Ascending aorta (tissue), 2 donors: ENCODE measurements at regions of chr15 and their contacts with region 1.

Region 1: DNA sequence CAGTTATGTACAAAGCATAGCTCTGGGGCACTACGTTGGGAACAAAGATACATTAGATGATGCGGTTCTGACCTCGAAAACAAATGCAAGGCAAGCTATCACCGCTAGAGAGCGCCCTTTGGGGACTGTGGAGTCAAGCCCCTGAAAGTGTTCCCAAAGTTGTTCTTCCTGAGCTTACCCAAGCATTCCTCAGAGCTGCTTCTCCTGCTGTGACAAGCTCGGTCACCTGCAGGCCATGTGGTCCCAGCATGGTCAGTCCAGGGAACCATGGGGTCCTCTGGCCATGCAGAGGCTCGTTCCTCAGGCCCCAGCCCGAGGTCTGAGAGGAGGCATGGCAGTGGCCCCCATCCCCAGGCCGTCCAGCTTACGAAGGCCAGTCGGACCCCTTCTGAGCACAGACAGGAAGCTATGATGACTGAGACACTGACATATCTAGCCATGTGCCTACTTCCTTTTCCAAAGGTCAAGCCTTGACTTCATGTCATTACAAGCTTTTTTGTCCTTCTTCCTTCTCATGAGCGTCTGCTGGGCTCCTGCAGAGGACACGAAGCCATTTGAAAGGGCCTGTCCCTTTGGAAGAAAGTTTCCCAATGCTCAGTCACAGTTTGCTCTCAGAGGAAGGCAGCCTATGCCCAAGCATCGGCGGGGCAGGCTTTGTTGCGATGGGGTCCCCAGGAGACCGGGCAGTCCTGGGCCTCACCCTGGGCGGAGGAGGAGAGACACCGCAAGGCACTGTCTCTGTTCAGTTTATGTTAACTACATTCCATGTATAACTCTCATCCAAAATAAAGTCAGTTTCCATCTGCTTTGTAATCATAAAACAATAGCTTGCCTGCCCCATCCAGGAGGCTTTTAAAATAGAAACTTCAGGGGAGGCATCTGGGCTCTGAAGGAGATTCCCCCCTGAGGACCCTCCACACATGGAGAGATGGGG is 79.3 kb downstream of the ATP10A start:
- DNase-seq: no peak
- H3K4me3 ChIP-seq: no peak overlapping the region
- H3K27ac ChIP-seq: peak overlapping the region; percentile 54 to 72
- H3K4me1 ChIP-seq: peaks cover 14 to 33% of the 10 kb centered on the region in 2 donors
- H3K27me3 ChIP-seq: no peaks in the 10 kb centered on the region
- CTCF ChIP-seq: peak; percentile 16 to 41 (median 22)

Region 2: DNA sequence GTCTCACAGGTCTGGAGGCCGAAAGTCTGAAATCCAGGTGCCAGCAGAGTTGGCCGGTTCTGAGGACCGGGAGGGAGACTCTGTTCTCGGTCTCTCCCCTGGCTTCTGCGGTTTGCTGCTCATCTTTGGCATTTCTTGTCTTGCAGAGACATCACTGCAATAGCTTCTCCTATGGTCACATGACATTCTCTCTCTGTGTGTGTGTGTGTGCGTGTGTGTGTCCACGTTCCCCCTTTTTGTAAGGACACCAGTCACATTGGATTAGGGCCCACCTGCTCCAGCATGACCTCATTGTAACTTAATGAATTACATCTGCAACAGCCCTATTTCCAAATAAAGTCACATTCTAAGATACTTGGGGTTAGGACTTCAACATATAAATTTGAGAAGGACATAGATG is 91.7 kb after region 1 on chr15:
- intact Hi-C with region 1: no loop called
- DNase-seq: no peak
- H3K4me3 ChIP-seq: no peak overlapping the region
- H3K27ac ChIP-seq: no peak overlapping the region
- H3K4me1 ChIP-seq: no peaks in the 10 kb centered on the region
- H3K27me3 ChIP-seq: no peaks in the 10 kb centered on the region
- CTCF ChIP-seq: no peak

Region 3: DNA sequence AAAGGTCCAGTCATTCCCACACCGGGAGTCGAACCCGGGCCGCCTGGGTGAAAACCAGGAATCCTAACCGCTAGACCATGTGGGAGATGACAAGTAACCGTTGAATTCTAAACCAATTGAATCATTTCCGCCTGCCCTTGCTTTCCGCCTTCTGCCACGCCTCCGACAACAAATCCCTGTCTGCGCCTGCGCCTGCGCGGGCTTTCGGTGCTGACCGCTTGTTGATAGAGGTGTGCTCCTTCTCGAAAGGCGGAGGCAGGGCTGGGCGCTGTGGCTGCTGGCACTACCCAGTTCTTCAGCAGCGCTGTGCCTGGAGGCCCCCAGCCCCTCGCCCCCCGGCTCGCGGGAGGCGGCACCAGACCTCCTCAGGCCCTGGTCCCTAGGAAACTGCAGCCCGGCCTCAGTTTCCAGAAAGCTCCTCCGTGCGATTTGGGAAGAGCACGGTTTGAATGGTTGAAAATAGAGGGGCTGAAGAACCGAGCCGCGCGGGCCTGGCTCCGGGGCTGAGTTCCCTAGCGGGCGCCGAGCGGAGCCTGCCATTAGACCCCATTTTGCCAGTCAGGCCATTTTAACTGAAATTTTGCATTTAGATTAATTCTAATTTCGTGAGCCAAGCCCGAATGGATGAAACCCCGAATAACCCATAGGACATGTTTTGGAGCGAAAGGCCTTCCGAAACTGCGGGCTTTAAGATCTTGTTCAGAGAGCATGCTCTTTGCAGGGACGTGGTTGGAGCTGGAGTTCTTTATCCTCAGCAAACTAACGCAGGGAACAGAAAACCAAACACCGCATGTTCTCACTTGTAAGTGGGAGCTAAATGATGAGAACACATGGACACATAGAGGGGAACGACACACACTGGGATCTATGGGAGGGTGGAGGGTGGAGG is 298.6 kb after region 1 on chr15:
- intact Hi-C with region 1: loop called (anchors 10 kb)
- DNase-seq: peak; percentile 90 to 99
- H3K4me3 ChIP-seq: peak overlapping the region; percentile 68 to 89
- H3K27ac ChIP-seq: peak overlapping the region; percentile 89 to 92
- H3K4me1 ChIP-seq: peaks cover 0 to 7% of the 10 kb centered on the region in 2 donors
- H3K27me3 ChIP-seq: no peaks in the 10 kb centered on the region
- CTCF ChIP-seq: peak in 1 of 3 experiments; percentile 15

Region 4: GRCh38 chr15:26222781-26223180 is 438.9 kb after region 1 on chr15:
- intact Hi-C with region 1: no loop called
- DNase-seq: no peak
- H3K4me3 ChIP-seq: no peak overlapping the region
- H3K27ac ChIP-seq: no peak overlapping the region
- H3K4me1 ChIP-seq: no peaks in the 10 kb centered on the region
- H3K27me3 ChIP-seq: no peaks in the 10 kb centered on the region
- CTCF ChIP-seq: no peak